Sciatic nerve (tissue), 2 donors: ENCODE measurements at regions of chr2 and their contacts with region 1.

Region 1: GRCh38 chr2:15895615-15896469 is 44.5 kb upstream of the MYCN start:
- DNase-seq: no peak
- ATAC-seq: no peak

Region 2: GRCh38 chr2:14749869-14750268 is 1146.0 kb before region 1 on chr2:
- intact Hi-C with region 1: loop called (anchors 5 kb)
- DNase-seq: no peak
- ATAC-seq: no peak

Region 3: DNA sequence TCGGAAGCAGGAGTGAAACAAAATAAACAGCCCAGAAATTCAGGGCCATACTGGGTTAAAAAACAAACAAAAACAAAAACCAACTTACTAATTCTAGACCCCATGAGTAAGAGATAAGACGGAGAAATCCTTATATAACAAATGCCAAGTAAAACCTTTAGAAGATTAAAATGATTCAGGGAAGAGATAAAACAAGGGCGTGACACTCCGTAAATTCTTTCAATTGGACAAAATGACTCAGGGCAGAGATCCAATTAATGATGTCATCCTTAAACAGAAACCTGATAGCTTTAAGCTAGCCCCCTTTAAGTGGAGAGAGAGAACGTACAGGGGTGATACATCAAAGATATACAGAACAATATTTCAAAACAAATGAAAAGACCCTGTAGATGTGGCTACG is 652.1 kb before region 1 on chr2:
- intact Hi-C with region 1: no loop called
- DNase-seq: no peak
- ATAC-seq: no peak